ENCODE measurements at regions of chr15 and their contacts with region 1.

Region 1: GRCh38 chr15:84658080-84658787 is at the start of gene NMB:
- DNase-seq: peak; percentile 89
- ATAC-seq: peak; percentile 56
- H3K4me3 Mint-ChIP-seq: peak within 1 kb of the TSS; percentile 69
- H3K27ac Mint-ChIP-seq: peak within 1 kb of the TSS; percentile 66
- H3K4me1 Mint-ChIP-seq: peaks cover 30% of the 10 kb centered on the region
- H3K27me3 Mint-ChIP-seq: no peaks in the 10 kb centered on the region
- total RNA-seq, gene NMB: 2.7 to 4.0 TPM

Region 2: GRCh38 chr15:84570164-84570735 is 88.0 kb before region 1 on chr15:
- CTCF ChIA-PET with region 1: no interaction called
- POLR2A ChIA-PET with region 1: no interaction called
- intact Hi-C with region 1: loop called in 1 of 2 experiments (anchors 1 kb)
- DNase-seq: peak; percentile 69
- ATAC-seq: peak; percentile 43
- H3K4me3 Mint-ChIP-seq: peak overlapping the region; percentile 73
- H3K27ac Mint-ChIP-seq: peak overlapping the region; percentile 77
- H3K4me1 Mint-ChIP-seq: peaks cover 20% of the 10 kb centered on the region
- H3K27me3 Mint-ChIP-seq: peaks cover 2% of the 10 kb centered on the region

Region 3: GRCh38 chr15:84600851-84601838 is 57.1 kb before region 1 on chr15 and contains the start of gene ZSCAN2:
- CTCF ChIA-PET with region 1: interaction called, 6 read pairs
- POLR2A ChIA-PET with region 1: interaction called, 4 read pairs
- intact Hi-C with region 1: loop called (anchors 1 kb)
- DNase-seq: peak; percentile 97
- ATAC-seq: peak; percentile 96
- H3K4me3 Mint-ChIP-seq: peak within 1 kb of the TSS; percentile 82
- H3K27ac Mint-ChIP-seq: peak within 1 kb of the TSS; percentile 58
- H3K4me1 Mint-ChIP-seq: peaks cover 65% of the 10 kb centered on the region
- H3K27me3 Mint-ChIP-seq: no peaks in the 10 kb centered on the region
- total RNA-seq, gene ZSCAN2: 5.1 to 5.4 TPM

Region 4: DNA sequence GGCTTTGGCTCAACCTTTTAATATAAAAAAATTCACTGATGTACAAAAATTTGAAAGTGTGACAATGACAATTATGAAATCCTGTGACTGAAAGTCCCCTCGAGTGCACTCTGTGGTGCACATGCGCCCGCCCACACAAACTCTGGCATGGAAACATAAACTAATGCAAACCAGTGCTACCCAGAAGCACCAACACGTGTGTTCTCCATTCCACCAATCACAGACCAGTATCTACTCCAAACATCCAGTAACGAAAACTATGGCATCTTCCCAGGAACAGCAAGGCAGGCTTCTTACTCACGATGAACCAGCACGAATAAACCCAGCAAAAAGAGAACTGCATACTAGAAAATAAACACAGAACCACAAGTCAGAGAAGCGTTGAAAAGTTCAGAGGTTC is 11.5 kb after region 1 on chr15:
- CTCF ChIA-PET with region 1: interaction called, 7 read pairs
- POLR2A ChIA-PET with region 1: no interaction called
- intact Hi-C with region 1: loop called in 1 of 2 experiments (anchors 1 kb)
- DNase-seq: peak; percentile 77
- ATAC-seq: peak; percentile 27
- H3K4me3 Mint-ChIP-seq: no peak overlapping the region
- H3K27ac Mint-ChIP-seq: peak overlapping the region; percentile 64
- H3K4me1 Mint-ChIP-seq: peaks cover 56% of the 10 kb centered on the region
- H3K27me3 Mint-ChIP-seq: no peaks in the 10 kb centered on the region

Region 5: GRCh38 chr15:84734794-84735479 is 76.7 kb after region 1 on chr15:
- CTCF ChIA-PET with region 1: interaction called, 6 read pairs
- POLR2A ChIA-PET with region 1: no interaction called
- intact Hi-C with region 1: loop called in 1 of 2 experiments (anchors 1 kb)
- DNase-seq: peak; percentile 87
- ATAC-seq: peak; percentile 72
- H3K4me3 Mint-ChIP-seq: peak overlapping the region; percentile 59
- H3K27ac Mint-ChIP-seq: peak overlapping the region; percentile 97
- H3K4me1 Mint-ChIP-seq: peaks cover 63% of the 10 kb centered on the region
- H3K27me3 Mint-ChIP-seq: no peaks in the 10 kb centered on the region

Region 6: DNA sequence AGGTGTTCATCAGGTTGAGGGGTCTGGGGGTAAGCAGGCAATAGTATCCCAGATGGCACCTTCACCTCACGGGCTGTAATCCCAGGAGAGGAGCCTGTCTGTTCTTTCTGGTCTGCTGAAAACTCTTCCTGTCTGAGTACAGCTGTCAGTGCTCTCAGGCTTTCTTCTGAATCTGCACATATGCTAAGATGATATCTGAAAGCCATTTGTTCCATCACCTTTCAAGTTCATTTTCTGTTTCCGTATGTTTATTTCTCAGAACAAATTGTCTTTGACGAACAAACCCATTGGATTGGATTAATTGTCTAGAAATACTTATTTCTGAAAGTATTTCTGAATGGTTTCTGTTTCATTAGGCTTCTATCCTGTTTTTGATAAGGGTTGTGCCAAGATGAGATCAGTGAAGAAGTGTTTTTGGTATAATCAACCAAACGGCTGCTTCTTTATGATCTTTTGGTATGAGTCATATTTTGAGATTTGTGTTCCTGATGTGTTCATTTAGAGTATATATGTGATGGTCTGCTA is 103.4 kb after region 1 on chr15:
- CTCF ChIA-PET with region 1: interaction called, 6 read pairs
- POLR2A ChIA-PET with region 1: no interaction called
- intact Hi-C with region 1: loop called in 1 of 2 experiments (anchors 1 kb)
- DNase-seq: peak; percentile 28
- ATAC-seq: peak; percentile 83
- H3K4me3 Mint-ChIP-seq: no peak overlapping the region
- H3K27ac Mint-ChIP-seq: no peak overlapping the region
- H3K4me1 Mint-ChIP-seq: peaks cover 14% of the 10 kb centered on the region
- H3K27me3 Mint-ChIP-seq: no peaks in the 10 kb centered on the region

Region 7: DNA sequence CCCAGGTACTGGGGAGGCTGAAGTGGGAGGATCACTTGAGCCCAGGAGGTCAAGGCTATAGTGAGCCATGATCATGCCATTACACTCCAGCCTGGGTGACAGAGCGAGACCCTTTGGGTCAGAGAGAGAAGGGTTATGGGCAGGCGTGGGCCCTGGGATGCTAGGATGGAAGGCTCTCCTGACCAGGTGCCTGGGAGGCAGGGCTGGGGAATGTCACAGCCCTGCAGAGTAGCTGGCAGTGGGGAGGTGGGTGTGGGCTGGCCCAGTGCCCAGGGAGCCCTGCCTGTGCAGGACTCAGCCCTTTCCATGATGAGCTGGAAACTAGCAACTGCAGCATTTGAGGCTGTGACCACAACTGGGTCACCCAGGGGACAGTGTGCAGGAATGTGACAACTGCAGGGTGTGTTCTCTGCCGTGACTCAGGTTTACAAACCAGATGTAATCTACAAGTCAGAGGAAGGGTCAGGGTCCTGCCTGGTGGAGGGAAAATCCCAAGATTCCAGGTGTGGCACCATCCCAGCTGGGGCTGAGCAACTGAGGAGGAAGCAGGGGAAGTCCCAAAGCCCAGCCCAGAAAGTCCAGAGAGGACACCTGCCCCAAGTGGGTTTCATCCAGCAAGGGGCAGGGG is 271.6 kb after region 1 on chr15:
- CTCF ChIA-PET with region 1: interaction called, 5 read pairs
- POLR2A ChIA-PET with region 1: no interaction called
- intact Hi-C with region 1: loop called (anchors 1 to 2 kb)
- DNase-seq: peak; percentile 44
- ATAC-seq: peak; percentile 40
- H3K4me3 Mint-ChIP-seq: no peak overlapping the region
- H3K27ac Mint-ChIP-seq: no peak overlapping the region
- H3K4me1 Mint-ChIP-seq: peaks cover 5% of the 10 kb centered on the region
- H3K27me3 Mint-ChIP-seq: no peaks in the 10 kb centered on the region

Region 8: GRCh38 chr15:85125056-85125661 is 466.9 kb after region 1 on chr15:
- CTCF ChIA-PET with region 1: no interaction called
- POLR2A ChIA-PET with region 1: no interaction called
- intact Hi-C with region 1: no loop called
- DNase-seq: no peak
- ATAC-seq: no peak
- H3K4me3 Mint-ChIP-seq: no peak overlapping the region
- H3K27ac Mint-ChIP-seq: no peak overlapping the region
- H3K4me1 Mint-ChIP-seq: peaks cover 8% of the 10 kb centered on the region
- H3K27me3 Mint-ChIP-seq: no peaks in the 10 kb centered on the region

Measured in activated CD4-positive, alpha-beta T cell treated with anti-CD3 and anti-CD28 coated beads for 36 hours (primary cell).